ENCODE measurements at regions of chr20 and their contacts with region 1.

Region 1: GRCh38 chr20:13839421-13840092 is 54.7 kb downstream of the NDUFAF5 start:
- DNase-seq: no peak
- H3K4me3 ChIP-seq: no peak overlapping the region
- H3K27ac ChIP-seq: peak overlapping the region in 3 of 4 donors; percentile 59 to 81 (median 67)
- H3K4me1 ChIP-seq: peaks cover 4 to 55% (median 36%) of the 10 kb centered on the region in 4 donors
- H3K27me3 ChIP-seq: no peaks in the 10 kb centered on the region
- CTCF ChIP-seq: no peak
- EP300 ChIP-seq: no peak
- POLR2A ChIP-seq: no peak

Region 2: DNA sequence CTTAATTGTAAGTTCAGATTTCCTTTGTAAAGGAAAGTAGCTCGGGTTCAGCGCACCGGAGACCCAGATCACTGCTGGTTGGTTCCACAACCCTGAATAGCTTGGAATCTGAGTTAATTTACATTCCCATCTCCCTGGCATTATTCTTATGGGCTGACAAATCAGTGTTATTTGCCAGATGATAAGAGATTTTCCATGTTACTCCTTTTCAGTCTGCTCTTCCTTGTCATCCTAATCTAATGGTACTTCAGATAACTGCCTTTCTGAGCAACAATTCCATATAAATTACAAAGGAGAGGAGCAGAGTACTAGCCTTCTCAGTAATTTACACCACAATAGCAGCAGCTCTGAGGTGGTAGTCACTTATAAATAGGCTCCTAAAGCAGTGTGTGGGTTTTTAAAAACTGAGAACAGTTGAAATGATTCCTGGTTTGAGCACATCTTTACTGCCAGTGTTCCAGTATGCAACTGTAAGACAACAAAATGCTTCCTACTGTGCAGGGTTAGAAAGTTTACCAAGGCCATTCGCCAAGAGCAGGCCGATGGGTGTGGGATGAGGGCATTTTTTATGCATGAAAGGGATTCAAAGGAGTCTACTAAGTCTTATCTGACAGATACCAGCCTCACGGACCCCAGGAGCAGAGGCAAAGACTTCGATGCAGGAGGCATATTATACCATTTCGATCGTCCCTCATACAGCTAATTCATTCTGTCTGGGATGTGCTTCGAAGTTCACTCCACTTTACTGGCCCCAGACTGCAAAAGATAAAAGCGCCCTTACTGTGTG is 35.0 kb after region 1 on chr20:
- intact Hi-C with region 1: loop called (anchors 2 kb)
- DNase-seq: no peak
- H3K4me3 ChIP-seq: no peak overlapping the region
- H3K27ac ChIP-seq: peak overlapping the region in 3 of 4 donors; percentile 57 to 81 (median 80)
- H3K4me1 ChIP-seq: peaks cover 0 to 66% (median 58%) of the 10 kb centered on the region in 4 donors
- H3K27me3 ChIP-seq: no peaks in the 10 kb centered on the region
- CTCF ChIP-seq: no peak
- EP300 ChIP-seq: no peak
- POLR2A ChIP-seq: no peak

Measured in sigmoid colon (tissue), 7 donors.